ENCODE measurements at regions of chr10 and their contacts with region 1.

Region 1: DNA sequence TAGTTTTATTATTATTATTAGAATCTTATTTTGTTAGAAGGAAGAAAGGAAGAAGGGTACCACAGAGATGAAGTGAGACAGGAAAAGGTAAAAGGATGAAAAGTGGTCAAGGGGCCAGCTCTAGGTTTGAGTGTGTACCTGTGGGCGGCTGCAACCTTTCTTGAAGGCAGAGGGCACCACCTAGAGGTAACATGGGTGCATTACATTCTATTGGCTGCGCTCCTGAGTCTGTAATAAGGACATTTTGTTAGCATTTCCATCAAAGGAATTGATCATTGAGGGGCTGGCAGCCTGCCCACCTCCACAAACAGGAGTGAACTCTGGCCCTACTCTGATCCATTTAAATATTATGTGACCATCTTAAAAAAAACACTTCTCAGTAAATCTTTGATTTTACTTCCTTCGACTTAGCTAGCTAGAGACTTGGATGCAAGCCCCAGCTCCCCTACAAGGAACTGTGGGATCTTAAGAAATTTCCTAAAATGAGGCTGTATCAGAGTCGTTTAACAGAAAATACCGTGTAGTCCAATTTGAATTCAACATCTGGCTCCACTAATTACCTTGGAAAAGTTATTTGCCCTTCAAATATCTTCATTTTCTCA is 610.4 kb downstream of the IPMK start:
- DNase-seq: no peak
- H3K4me3 ChIP-seq: no peak overlapping the region
- H3K27ac ChIP-seq: no peak overlapping the region
- H3K4me1 ChIP-seq: no peaks in the 10 kb centered on the region
- H3K27me3 ChIP-seq: no peaks in the 10 kb centered on the region
- CTCF ChIP-seq: peak; percentile 78 to 90 (median 81)

Region 2: GRCh38 chr10:57593983-57594573 is 63.2 kb before region 1 on chr10:
- dilution Hi-C with region 1: loop called (anchors 5 kb)
- DNase-seq: no peak
- H3K4me3 ChIP-seq: no peak overlapping the region
- H3K27ac ChIP-seq: no peak overlapping the region
- H3K4me1 ChIP-seq: no peaks in the 10 kb centered on the region
- H3K27me3 ChIP-seq: no peaks in the 10 kb centered on the region
- CTCF ChIP-seq: no peak

Measured in keratinocyte (primary cell).